Calu3 (cell line): ENCODE measurements at regions of chr11 and their contacts with region 1.

Region 1: GRCh38 chr11:3879967-3880542 is 24.6 kb downstream of the STIM1 start:
- DNase-seq: peak; percentile 40
- H3K4me3 Mint-ChIP-seq: peak overlapping the region; percentile 17
- H3K27ac Mint-ChIP-seq: peak overlapping the region; percentile 72
- H3K4me1 Mint-ChIP-seq: peaks cover 64% of the 10 kb centered on the region
- H3K27me3 Mint-ChIP-seq: no peaks in the 10 kb centered on the region
- CTCF ChIP-seq: no peak

Region 2: GRCh38 chr11:3775736-3776406 is 104.2 kb before region 1 on chr11:
- CTCF ChIA-PET with region 1: no interaction called
- intact Hi-C with region 1: no loop called
- DNase-seq: no peak
- H3K4me3 Mint-ChIP-seq: no peak overlapping the region
- H3K27ac Mint-ChIP-seq: no peak overlapping the region
- H3K4me1 Mint-ChIP-seq: no peaks in the 10 kb centered on the region
- H3K27me3 Mint-ChIP-seq: no peaks in the 10 kb centered on the region
- CTCF ChIP-seq: no peak

Region 3: GRCh38 chr11:3905080-3905953 is 25.3 kb after region 1 on chr11:
- CTCF ChIA-PET with region 1: interaction called, 7 read pairs
- intact Hi-C with region 1: loop called (anchors 2 kb)
- DNase-seq: peak; percentile 82
- H3K4me3 Mint-ChIP-seq: peak overlapping the region; percentile 56
- H3K27ac Mint-ChIP-seq: peak overlapping the region; percentile 95
- H3K4me1 Mint-ChIP-seq: peaks cover 60% of the 10 kb centered on the region
- H3K27me3 Mint-ChIP-seq: no peaks in the 10 kb centered on the region
- CTCF ChIP-seq: no peak

Region 4: DNA sequence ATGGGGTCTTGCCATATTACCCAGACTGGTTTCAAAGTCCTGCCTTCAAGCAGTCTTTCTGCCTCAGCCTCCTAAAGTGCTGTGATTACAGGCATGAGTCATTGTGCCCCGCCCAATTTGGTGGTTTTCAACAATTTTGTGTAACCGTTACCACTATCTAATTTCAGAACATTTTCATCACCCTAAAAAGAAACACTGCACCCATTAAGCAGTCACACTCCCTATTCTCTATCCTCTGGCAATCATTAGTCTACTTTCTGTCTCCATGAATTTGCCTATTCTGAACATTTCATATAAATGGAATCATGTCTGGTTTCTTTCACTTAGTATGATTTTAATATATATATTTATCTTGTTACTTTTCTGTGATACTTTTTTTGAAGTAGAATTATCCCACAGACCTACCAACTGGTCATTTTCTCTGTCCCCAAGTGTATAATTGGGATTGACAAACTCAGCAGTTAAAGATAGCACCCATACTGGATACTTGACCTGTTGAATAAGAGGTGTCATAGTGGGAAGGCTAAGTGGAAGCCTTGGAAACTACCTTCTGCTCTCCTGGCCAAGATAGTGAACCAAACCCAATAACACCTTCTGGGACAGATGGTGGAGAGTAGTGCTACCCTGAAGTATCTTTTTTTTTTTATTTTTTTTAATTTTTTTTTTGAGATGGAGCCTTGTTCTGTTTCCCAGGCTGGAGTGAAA is 40.2 kb after region 1 on chr11:
- CTCF ChIA-PET with region 1: no interaction called
- intact Hi-C with region 1: loop called (anchors 5 kb)
- DNase-seq: peak; percentile 31
- H3K4me3 Mint-ChIP-seq: no peak overlapping the region
- H3K27ac Mint-ChIP-seq: peak overlapping the region; percentile 67
- H3K4me1 Mint-ChIP-seq: peaks cover 21% of the 10 kb centered on the region
- H3K27me3 Mint-ChIP-seq: no peaks in the 10 kb centered on the region
- CTCF ChIP-seq: no peak